ENCODE measurements at regions of chr3 and their contacts with region 1.

Region 1: GRCh38 chr3:56453011-56453410 is 15.3 kb downstream of the ERC2 start:
- DNase-seq: no peak

Region 2: GRCh38 chr3:56339671-56340070 is 113.3 kb before region 1 on chr3:
- CTCF ChIA-PET with region 1: interaction called, 12 read pairs
- POLR2A ChIA-PET with region 1: no interaction called
- DNase-seq: no peak